Common myeloid progenitor, CD34-positive (primary cell): ENCODE measurements at regions of chr17 and their contacts with region 1.

Region 1: DNA sequence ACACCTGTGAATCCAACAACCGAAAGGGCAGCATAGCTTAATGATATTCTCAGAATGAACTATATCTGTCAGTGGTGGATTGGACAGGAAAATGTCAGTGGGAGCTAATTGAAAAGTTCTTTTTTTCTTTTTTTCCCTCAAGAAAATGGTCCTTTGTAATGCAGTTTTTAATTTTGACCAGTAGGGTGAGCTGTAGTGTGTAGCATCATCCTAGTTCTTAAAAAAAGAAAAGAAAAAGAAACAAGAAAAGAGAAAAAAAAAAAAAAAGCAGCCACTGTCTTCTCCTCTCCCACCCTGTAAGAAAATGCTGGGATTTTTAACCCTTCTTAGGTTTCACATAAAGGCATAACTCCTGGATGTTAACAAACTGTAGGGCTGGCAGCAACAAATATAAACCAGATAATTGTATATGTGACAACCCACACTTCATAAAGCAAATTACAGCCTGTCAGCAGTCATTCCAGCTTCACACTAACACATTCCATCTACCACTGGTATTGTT is 78.1 kb downstream of the SKAP1 start:
- DNase-seq: peak; percentile 54 to 63 (median 62)
- H3K4me3 ChIP-seq: no peak overlapping the region
- H3K27ac ChIP-seq: no peak overlapping the region
- H3K4me1 ChIP-seq: peaks cover 0 to 3% (median 0%) of the 10 kb centered on the region in 4 experiments
- H3K27me3 ChIP-seq: no peaks in the 10 kb centered on the region

Region 2: DNA sequence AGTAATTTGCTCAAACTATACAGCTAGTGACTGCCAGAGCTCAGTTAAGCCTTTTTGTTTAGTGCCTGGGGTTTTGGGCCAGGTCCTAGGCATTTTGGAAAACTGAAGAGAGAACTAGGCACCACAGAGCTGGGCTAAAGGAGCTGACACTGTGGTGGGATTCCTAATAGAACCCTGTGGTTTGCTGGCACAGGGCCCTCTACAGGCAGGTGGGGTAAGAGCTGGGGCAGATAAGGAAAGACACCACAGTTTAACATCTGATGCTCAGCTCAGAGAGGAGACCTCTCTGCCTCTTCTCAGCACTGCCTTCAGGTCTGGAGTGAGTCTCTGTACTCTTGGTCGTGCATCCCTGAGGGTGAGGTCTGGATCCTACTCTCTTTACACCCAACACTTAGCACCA is 123.2 kb before region 1 on chr17:
- CTCF ChIA-PET with region 1: no interaction called
- POLR2A ChIA-PET with region 1: no interaction called
- DNase-seq: peak in 2 of 3 donors; percentile 23 to 40
- H3K4me3 ChIP-seq: no peak overlapping the region
- H3K27ac ChIP-seq: no peak overlapping the region
- H3K4me1 ChIP-seq: peaks cover 0 to 2% (median 0%) of the 10 kb centered on the region in 4 experiments
- H3K27me3 ChIP-seq: no peaks in the 10 kb centered on the region

Region 3: DNA sequence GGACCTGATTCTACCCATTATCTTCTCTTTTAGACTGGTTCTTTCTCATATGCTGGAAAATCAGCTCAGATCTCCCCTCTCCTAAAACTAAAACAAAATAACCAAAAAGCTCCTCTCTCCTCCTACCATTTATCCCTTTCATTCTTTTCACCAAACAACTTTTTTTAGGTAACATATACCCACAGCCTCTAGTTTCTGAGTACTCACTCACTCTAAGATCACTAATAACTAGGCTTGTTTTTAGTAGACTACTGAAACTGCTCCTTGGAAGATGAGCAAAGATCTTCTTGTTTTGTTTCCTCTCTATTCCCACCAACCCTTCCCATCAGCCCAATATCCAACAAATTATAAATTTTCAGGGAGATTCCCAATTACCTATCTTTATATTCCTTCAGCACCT is 50.9 kb before region 1 on chr17:
- CTCF ChIA-PET with region 1: no interaction called
- POLR2A ChIA-PET with region 1: no interaction called
- DNase-seq: no peak
- H3K4me3 ChIP-seq: no peak overlapping the region
- H3K27ac ChIP-seq: no peak overlapping the region
- H3K4me1 ChIP-seq: peaks cover 0 to 6% (median 3%) of the 10 kb centered on the region in 4 experiments
- H3K27me3 ChIP-seq: no peaks in the 10 kb centered on the region

Region 4: GRCh38 chr17:48363161-48363560 is 11.3 kb after region 1 on chr17:
- CTCF ChIA-PET with region 1: interaction called, 16 read pairs
- POLR2A ChIA-PET with region 1: no interaction called
- DNase-seq: no peak
- H3K4me3 ChIP-seq: no peak overlapping the region
- H3K27ac ChIP-seq: no peak overlapping the region
- H3K4me1 ChIP-seq: peaks cover 0 to 7% (median 3%) of the 10 kb centered on the region in 4 experiments
- H3K27me3 ChIP-seq: no peaks in the 10 kb centered on the region

Region 5: DNA sequence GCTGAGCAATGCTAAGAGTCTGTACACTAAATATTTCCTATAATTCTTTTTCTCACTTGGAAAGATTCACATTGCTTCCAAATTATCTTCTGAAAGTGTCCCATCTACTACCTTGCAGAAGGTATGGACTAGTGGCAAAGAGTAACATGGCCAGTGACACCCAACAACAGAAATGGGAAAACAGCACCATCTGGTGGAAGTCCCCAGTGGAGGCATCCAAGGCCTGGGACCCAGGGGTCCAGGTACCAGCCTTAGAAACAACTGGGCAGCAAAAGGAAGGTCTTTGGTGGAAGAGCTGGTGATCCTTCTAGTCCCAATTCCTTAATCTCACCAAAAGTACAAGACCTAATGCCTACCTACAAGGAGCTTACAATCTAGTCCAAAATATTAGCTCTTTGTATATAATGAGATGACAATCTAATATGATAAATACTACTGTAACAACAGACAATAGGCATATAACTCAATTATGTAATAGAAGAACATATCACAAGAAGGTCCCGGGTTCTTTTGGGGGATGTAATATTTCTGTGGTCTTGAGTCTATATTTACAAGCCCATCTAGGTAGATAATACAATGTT is 22.9 kb after region 1 on chr17:
- CTCF ChIA-PET with region 1: interaction called, 24 read pairs
- POLR2A ChIA-PET with region 1: no interaction called
- DNase-seq: peak; percentile 51 to 75 (median 71)
- H3K4me3 ChIP-seq: no peak overlapping the region
- H3K27ac ChIP-seq: no peak overlapping the region
- H3K4me1 ChIP-seq: peaks cover 0 to 8% (median 1%) of the 10 kb centered on the region in 4 experiments
- H3K27me3 ChIP-seq: no peaks in the 10 kb centered on the region